GM12878 (cell line): ENCODE measurements at regions of chr11 and their contacts with region 1.

Region 1: GRCh38 chr11:112627588-112628045 is 333.6 kb upstream of the NCAM1 start:
- DNase-seq: peak; percentile 83
- ATAC-seq: peak; percentile 86
- H3K4me3 ChIP-seq: peak overlapping the region; percentile 51; the same call in 1 of the 2 replicates
- H3K27ac ChIP-seq: peak overlapping the region; percentile 88
- H3K4me1 ChIP-seq: peaks cover 61% of the 10 kb centered on the region
- H3K27me3 ChIP-seq: no peaks in the 10 kb centered on the region
- CTCF ChIP-seq: no peak
- EP300 ChIP-seq: peak; percentile 49 to 56; a peak in 3 of 4 replicates
- POLR2A ChIP-seq: peak; percentile 66
- RAD21 ChIP-seq: no peak

Region 2: DNA sequence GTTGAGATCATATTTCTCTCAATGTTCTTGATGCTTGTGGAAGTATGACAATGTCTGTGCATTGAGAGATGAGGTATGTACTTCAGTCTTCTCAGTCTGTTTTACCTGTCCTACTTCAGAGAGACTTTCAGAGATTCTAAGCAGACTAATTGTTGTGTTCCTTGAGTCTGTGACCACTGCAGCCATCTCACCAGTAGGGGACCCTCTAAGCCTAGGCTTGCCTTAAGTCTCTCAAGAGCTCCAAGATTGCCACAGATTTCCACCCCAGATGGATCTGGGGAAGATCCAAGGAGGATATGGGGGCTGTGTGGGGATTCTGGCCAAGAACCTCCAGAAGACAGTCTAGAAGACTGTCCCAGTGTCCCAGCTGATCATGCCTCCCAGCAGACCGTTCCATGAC is 187.1 kb before region 1 on chr11:
- CTCF ChIA-PET with region 1: no interaction called
- POLR2A ChIA-PET with region 1: no interaction called
- RAD21 ChIA-PET with region 1: no interaction called
- SMC1A ChIA-PET with region 1: no interaction called
- in situ Hi-C with region 1: no loop called
- intact Hi-C with region 1: no loop called
- DNase-seq: no peak
- ATAC-seq: no peak
- H3K4me3 ChIP-seq: no peak overlapping the region
- H3K27ac ChIP-seq: no peak overlapping the region
- H3K4me1 ChIP-seq: no peaks in the 10 kb centered on the region
- H3K27me3 ChIP-seq: no peaks in the 10 kb centered on the region
- CTCF ChIP-seq: peak; percentile 9 to 40 (median 24); a peak in 2 of 6 replicates
- EP300 ChIP-seq: no peak
- POLR2A ChIP-seq: no peak
- RAD21 ChIP-seq: peak; percentile 37; the same call in 1 of the 2 replicates

Region 3: GRCh38 chr11:112639469-112639868 is 11.9 kb after region 1 on chr11:
- CTCF ChIA-PET with region 1: interaction called, 3 read pairs
- POLR2A ChIA-PET with region 1: interaction called, 4 read pairs
- RAD21 ChIA-PET with region 1: interaction called, 10 read pairs
- SMC1A ChIA-PET with region 1: interaction called, 43 read pairs
- in situ Hi-C with region 1: no loop called
- intact Hi-C with region 1: no loop called
- DNase-seq: no peak
- ATAC-seq: no peak
- H3K4me3 ChIP-seq: no peak overlapping the region
- H3K27ac ChIP-seq: no peak overlapping the region
- H3K4me1 ChIP-seq: peaks cover 2% of the 10 kb centered on the region; the same call in 1 of the 2 replicates
- H3K27me3 ChIP-seq: no peaks in the 10 kb centered on the region
- CTCF ChIP-seq: no peak
- EP300 ChIP-seq: no peak
- POLR2A ChIP-seq: no peak
- RAD21 ChIP-seq: no peak